Endothelial cell of umbilical vein (primary cell): ENCODE measurements at regions of chr14 and their contacts with region 1.

Region 1: DNA sequence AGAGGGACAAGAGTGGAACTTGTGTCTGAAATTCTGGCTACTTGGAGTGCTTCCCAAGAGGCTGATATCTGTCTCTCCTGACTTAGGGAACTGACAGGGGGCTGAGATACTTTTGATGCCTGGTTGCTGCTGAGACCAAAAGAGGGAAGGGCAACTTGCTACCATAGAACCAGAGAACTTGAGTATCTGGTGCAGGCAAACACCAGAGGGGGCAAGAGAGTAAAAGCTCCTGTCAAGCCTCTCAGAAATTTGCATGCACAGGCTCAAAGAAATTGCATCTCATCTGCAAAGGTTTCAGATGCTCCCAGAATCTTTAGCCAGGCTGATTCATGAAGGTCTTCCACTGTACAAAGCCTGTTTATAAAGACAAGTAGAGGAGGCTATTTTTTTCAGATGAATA is 391.3 kb upstream of the FOXG1 start:
- DNase-seq: peak; percentile 19
- H3K4me3 ChIP-seq: no peak overlapping the region
- H3K27ac ChIP-seq: no peak overlapping the region
- H3K4me1 ChIP-seq: peaks cover 5% of the 10 kb centered on the region
- H3K27me3 ChIP-seq: no peaks in the 10 kb centered on the region
- CTCF ChIP-seq: peak; percentile 33 to 39
- POLR2A ChIP-seq: no peak

Region 2: DNA sequence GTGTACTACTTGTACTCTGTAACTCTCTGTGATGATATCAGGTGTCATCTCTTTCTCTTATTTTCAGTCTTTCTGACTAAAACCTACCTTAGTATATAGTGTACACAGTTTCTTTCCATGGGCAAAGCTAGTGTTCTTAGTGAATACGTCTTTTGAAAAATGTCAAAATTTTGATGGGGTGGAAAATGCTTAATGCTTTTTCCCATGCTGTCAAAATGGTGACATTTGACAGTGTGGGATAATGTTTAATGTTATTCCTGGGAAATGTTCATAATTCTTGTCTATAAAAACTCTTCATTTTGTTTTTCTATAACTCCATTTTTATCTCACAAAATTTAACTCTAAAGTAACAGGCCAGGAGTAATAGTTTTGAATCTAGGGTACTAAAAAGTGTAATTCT is 351.4 kb before region 1 on chr14:
- CTCF ChIA-PET with region 1: no interaction called
- POLR2A ChIA-PET with region 1: no interaction called
- dilution Hi-C with region 1: no loop called
- intact Hi-C with region 1: no loop called
- DNase-seq: no peak
- H3K4me3 ChIP-seq: no peak overlapping the region
- H3K27ac ChIP-seq: no peak overlapping the region
- H3K4me1 ChIP-seq: no peaks in the 10 kb centered on the region
- H3K27me3 ChIP-seq: no peaks in the 10 kb centered on the region
- CTCF ChIP-seq: no peak
- POLR2A ChIP-seq: no peak

Region 3: DNA sequence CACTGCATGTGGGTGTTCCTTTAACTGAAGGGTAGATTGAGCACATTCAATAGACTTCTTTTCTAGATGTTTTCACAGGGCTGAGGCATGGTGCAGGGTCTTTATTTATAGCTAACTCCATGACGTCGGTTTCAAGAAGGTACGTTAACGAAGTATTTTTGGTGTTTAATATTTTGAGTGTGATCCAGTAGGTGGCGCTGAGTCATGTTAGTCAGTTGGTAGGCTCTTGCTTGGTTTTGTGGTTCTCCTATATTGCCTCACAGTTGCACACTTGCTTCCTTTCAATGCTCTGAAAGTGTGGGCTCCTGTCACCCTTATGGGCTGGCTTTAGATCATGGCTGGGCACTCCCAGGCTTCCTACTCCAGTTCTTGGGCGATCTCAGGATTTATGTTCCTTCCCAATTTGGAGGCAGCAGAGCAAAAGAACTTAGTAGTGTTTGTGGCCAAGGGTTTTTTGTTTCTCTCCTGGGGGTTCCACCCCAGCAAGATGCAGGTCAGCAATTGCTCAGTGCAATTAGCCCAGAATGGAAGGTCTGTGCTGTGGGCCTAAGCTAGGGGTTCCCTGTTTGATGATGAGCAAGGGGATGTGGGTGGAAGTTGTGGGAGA is 80.4 kb before region 1 on chr14:
- CTCF ChIA-PET with region 1: interaction called, 6 read pairs
- POLR2A ChIA-PET with region 1: no interaction called
- dilution Hi-C with region 1: no loop called
- intact Hi-C with region 1: loop called (anchors 1 kb)
- DNase-seq: peak; percentile 33
- H3K4me3 ChIP-seq: no peak overlapping the region
- H3K27ac ChIP-seq: no peak overlapping the region
- H3K4me1 ChIP-seq: no peaks in the 10 kb centered on the region
- H3K27me3 ChIP-seq: no peaks in the 10 kb centered on the region
- CTCF ChIP-seq: peak; percentile 10 to 38
- POLR2A ChIP-seq: no peak

Region 4: GRCh38 chr14:28966416-28967233 is 591.3 kb after region 1 on chr14:
- CTCF ChIA-PET with region 1: no interaction called
- POLR2A ChIA-PET with region 1: no interaction called
- dilution Hi-C with region 1: no loop called
- intact Hi-C with region 1: no loop called
- DNase-seq: no peak
- H3K4me3 ChIP-seq: no peak overlapping the region
- H3K27ac ChIP-seq: no peak overlapping the region
- H3K4me1 ChIP-seq: no peaks in the 10 kb centered on the region
- H3K27me3 ChIP-seq: no peaks in the 10 kb centered on the region
- CTCF ChIP-seq: no peak
- POLR2A ChIP-seq: no peak